ENCODE measurements at regions of chr2 and their contacts with region 1.

Region 1: GRCh38 chr2:20744366-20745335 is 77.7 kb downstream of the GDF7 start:
- DNase-seq: no peak
- H3K4me3 ChIP-seq: no peak overlapping the region
- H3K27me3 ChIP-seq: no peaks in the 10 kb centered on the region
- CTCF ChIP-seq: no peak

Region 2: DNA sequence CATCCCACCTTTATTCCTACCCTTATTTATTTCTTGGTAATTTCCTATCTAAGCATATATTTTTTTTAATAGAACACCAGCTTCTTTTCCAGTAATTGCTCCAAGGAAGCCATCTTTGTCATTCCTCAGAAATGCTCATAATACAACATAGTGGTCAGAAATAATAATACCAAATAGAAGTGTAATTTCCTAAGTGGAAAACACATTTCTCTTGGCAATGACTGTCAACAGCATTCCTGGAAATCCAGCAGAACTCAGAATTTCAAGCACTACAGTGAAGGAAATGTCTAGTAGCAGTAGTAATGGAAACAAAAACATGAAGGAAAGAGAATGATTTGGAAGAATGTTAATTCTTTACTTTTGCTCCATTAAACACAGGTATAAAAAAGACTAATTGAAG is 21.1 kb before region 1 on chr2:
- CTCF ChIA-PET with region 1: no interaction called
- POLR2A ChIA-PET with region 1: no interaction called
- DNase-seq: peak; percentile 58
- H3K4me3 ChIP-seq: no peak overlapping the region
- H3K27me3 ChIP-seq: no peaks in the 10 kb centered on the region
- CTCF ChIP-seq: no peak

Region 3: GRCh38 chr2:20758997-20759396 is 14.3 kb after region 1 on chr2:
- CTCF ChIA-PET with region 1: interaction called, 12 read pairs
- POLR2A ChIA-PET with region 1: no interaction called
- DNase-seq: no peak
- H3K4me3 ChIP-seq: no peak overlapping the region
- H3K27me3 ChIP-seq: no peaks in the 10 kb centered on the region
- CTCF ChIP-seq: no peak